CD14-positive monocyte (primary cell): ENCODE measurements at regions of chr11 and their contacts with region 1.

Region 1: DNA sequence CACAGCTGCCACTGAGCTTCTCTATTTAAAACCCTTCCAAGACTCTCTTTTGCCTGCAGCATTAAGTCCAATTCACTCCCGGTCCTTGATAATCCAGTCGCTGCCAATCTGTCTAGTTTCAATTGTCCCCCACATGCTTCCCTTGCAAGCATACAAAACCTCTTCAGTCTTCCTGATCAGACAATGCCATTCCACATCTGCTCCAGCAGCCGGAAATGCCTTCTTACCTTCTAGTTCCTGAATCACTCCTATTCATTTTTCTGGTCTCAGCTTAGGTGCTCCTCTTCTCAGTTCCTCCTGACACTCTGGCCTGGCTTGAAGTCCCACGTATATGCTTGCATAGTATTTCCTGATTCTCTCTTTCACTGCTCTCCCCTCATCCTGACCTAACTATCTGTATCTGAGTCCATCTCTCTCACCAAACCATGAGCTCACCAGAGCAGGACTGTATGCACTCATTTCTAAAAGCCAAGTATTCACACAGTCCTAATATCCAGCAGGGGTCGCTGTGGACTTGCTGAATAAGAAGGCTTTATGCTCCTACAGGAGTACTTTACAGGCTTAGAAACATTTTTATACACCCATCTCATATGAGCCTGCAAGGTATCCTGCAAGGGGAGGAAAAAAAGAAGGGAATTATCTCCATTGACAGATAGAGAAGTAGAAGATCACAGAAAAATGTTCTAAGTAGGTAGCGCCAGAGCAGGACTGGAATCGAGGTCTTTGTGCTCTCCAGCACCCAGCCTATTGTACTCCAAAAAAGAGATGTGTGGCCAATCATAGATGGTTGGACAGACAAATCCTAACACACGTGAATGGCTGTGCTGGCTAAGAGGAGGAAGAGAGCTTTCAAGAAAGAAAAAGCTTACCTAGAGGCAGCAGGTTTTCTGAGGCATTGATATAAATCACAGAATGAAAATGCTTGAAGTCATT is 19.2 kb downstream of the XRRA1 start:
- DNase-seq: peak; percentile 62 to 80 (median 78)
- H3K4me3 ChIP-seq: no peak overlapping the region
- H3K4me3 Mint-ChIP-seq: no peak overlapping the region
- H3K27ac ChIP-seq: no peak overlapping the region
- H3K27ac Mint-ChIP-seq: no peak overlapping the region
- H3K4me1 ChIP-seq: no peaks in the 10 kb centered on the region
- H3K4me1 Mint-ChIP-seq: no peaks in the 10 kb centered on the region
- H3K27me3 ChIP-seq: no peaks in the 10 kb centered on the region
- H3K27me3 Mint-ChIP-seq: no peaks in the 10 kb centered on the region
- CTCF ChIP-seq: peak; percentile 93

Region 2: GRCh38 chr11:74773481-74773880 is 156.2 kb before region 1 on chr11:
- intact Hi-C with region 1: no loop called
- DNase-seq: no peak
- H3K4me3 ChIP-seq: no peak overlapping the region
- H3K4me3 Mint-ChIP-seq: no peak overlapping the region
- H3K27ac ChIP-seq: no peak overlapping the region
- H3K27ac Mint-ChIP-seq: no peak overlapping the region
- H3K4me1 ChIP-seq: peaks cover 18 to 28% of the 10 kb centered on the region in 2 donors
- H3K4me1 Mint-ChIP-seq: peaks cover 41% of the 10 kb centered on the region
- H3K27me3 ChIP-seq: no peaks in the 10 kb centered on the region
- H3K27me3 Mint-ChIP-seq: no peaks in the 10 kb centered on the region
- CTCF ChIP-seq: no peak

Region 3: GRCh38 chr11:74988541-74989260 is 59.0 kb after region 1 on chr11 and contains the start of gene NEU3:
- intact Hi-C with region 1: loop called in 1 of 2 experiments (anchors 10 kb)
- DNase-seq: peak; percentile 47 to 64 (median 63)
- H3K4me3 ChIP-seq: peak within 1 kb of the TSS; percentile 64 to 89 (median 79)
- H3K4me3 Mint-ChIP-seq: peak within 1 kb of the TSS; percentile 97 to 98
- H3K27ac ChIP-seq: peak within 1 kb of the TSS; percentile 71 to 82
- H3K27ac Mint-ChIP-seq: peak within 1 kb of the TSS; percentile 90 to 97 (median 94)
- H3K4me1 ChIP-seq: peaks cover 21 to 36% of the 10 kb centered on the region in 2 donors
- H3K4me1 Mint-ChIP-seq: peaks cover 34% of the 10 kb centered on the region
- H3K27me3 ChIP-seq: no peaks in the 10 kb centered on the region
- H3K27me3 Mint-ChIP-seq: no peaks in the 10 kb centered on the region
- CTCF ChIP-seq: no peak
- polyA plus RNA-seq, gene NEU3: 2.3 to 25.1 (median 3.9) TPM

Region 4: DNA sequence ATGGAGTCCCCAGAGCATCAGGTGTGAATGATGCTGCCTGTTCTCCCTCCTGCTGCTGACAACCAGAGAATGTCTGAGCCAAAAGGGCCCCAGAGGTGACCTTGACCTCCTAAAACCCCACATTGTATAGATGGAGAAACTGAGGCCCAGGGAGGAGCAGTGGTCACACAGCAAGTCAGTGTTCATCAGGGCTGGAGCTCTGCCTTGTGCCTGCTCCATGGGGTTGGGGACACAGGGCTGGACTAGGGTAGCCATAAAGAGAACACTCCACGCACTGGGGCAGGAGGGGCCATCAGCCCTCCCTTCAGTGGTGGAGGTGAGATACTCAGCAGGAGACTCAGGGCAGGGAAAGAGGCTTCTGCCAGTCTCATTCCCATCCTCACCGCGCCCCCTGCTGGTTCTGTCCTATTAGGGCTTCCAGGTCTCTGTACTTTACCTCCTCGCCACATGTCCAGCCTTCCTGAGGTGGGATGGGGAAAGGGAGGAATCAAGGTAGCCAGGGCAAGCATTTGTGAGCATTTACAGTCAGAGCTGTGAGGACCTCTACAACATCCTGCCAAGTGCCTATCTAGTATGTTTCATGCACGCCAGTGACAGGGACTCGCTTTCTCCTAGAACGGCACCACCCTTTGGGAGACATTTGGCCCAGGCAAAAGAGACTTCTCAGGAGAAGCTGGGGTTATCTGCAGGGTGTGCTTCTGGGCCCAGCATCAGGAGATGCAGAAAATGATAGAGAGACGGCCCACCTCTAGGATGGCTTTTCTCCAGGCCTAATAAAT is 102.3 kb after region 1 on chr11:
- intact Hi-C with region 1: loop called (anchors 5 kb)
- DNase-seq: peak; percentile 17 to 44 (median 25)
- H3K4me3 ChIP-seq: no peak overlapping the region
- H3K4me3 Mint-ChIP-seq: no peak overlapping the region
- H3K27ac ChIP-seq: no peak overlapping the region
- H3K27ac Mint-ChIP-seq: no peak overlapping the region
- H3K4me1 ChIP-seq: no peaks in the 10 kb centered on the region
- H3K4me1 Mint-ChIP-seq: peaks cover 5% of the 10 kb centered on the region
- H3K27me3 ChIP-seq: no peaks in the 10 kb centered on the region
- H3K27me3 Mint-ChIP-seq: peaks cover 0 to 4% (median 3%) of the 10 kb centered on the region in 3 donors
- CTCF ChIP-seq: peak; percentile 81

Region 5: GRCh38 chr11:75063732-75064314 is 134.1 kb after region 1 on chr11:
- intact Hi-C with region 1: no loop called
- DNase-seq: no peak
- H3K4me3 ChIP-seq: no peak overlapping the region
- H3K4me3 Mint-ChIP-seq: no peak overlapping the region
- H3K27ac ChIP-seq: no peak overlapping the region
- H3K27ac Mint-ChIP-seq: no peak overlapping the region
- H3K4me1 ChIP-seq: no peaks in the 10 kb centered on the region
- H3K4me1 Mint-ChIP-seq: no peaks in the 10 kb centered on the region
- H3K27me3 ChIP-seq: peaks cover 3 to 9% of the 10 kb centered on the region in 2 donors
- H3K27me3 Mint-ChIP-seq: peaks cover 4 to 9% (median 8%) of the 10 kb centered on the region in 3 donors
- CTCF ChIP-seq: no peak

Region 6: GRCh38 chr11:75248690-75249268 is 319.1 kb after region 1 on chr11:
- intact Hi-C with region 1: loop called (anchors 5 to 10 kb)
- DNase-seq: peak; percentile 80 to 88 (median 85)
- H3K4me3 ChIP-seq: no peak overlapping the region
- H3K4me3 Mint-ChIP-seq: no peak overlapping the region
- H3K27ac ChIP-seq: no peak overlapping the region
- H3K27ac Mint-ChIP-seq: no peak overlapping the region
- H3K4me1 ChIP-seq: no peaks in the 10 kb centered on the region
- H3K4me1 Mint-ChIP-seq: no peaks in the 10 kb centered on the region
- H3K27me3 ChIP-seq: peaks cover 14 to 16% of the 10 kb centered on the region in 2 donors
- H3K27me3 Mint-ChIP-seq: peaks cover 27 to 41% (median 30%) of the 10 kb centered on the region in 3 donors
- CTCF ChIP-seq: peak; percentile 99